Right cardiac atrium (tissue), 5 donors: ENCODE measurements at regions of chr2 and their contacts with region 1.

Region 1: GRCh38 chr2:218832520-218832919 is 917 bp upstream of the PRKAG3 start:
- DNase-seq: peak; percentile 67 to 86 (median 80)
- ATAC-seq: peak; percentile 75 to 79
- H3K4me3 ChIP-seq: no peak overlapping the region
- H3K27ac ChIP-seq: peak overlapping the region; percentile 40
- H3K4me1 ChIP-seq: peaks cover 7% of the 10 kb centered on the region
- H3K27me3 ChIP-seq: no peaks in the 10 kb centered on the region

Region 2: DNA sequence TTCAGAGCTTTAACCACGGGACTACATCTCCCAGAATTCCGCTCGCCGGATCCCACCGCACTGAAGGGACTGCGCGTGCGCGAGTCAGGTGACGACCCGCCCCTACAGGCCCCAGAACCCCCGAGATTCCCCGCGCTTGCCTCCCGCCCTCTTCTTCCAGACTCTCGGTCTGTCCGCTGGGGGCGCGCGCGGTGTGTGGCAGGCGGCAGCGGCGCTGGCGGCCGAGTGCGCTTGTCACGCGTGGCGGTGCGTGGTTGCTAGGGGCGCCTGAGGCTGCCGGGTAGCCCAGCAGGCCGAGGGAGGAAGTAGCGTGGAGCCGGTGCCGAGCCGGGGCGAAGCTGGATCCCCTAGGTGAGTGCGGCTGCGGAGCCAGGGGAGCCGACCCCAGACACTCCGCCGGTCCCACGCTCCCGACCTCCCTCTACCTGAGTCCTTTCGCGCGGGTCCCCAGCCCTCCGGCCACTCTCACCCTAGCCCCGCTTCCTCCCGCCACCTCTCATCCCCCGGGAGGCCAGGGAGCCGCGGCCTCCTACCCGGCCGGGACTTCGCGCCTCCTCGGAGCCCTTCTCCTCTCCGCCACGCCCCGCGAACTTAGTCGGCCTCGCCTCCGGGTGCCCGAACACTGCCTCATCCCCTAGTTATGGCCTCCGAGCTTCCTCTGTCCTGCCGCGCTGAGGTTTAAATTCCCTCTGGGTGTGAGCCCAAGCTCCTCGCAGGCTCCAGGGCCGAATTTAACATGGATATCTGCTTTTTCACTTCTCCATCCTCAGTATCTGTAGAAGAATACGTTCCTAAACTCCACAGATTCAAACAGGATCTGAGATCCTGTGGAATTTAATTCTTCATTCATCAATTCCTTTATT is 121.6 kb before region 1 on chr2 and contains the start of gene TTLL4:
- intact Hi-C with region 1: loop called in 1 of 4 experiments (anchors 10 kb)
- DNase-seq: peak; percentile 99
- ATAC-seq: peak; percentile 99
- H3K4me3 ChIP-seq: peak within 1 kb of the TSS; percentile 76
- H3K27ac ChIP-seq: peak within 1 kb of the TSS; percentile 77
- H3K4me1 ChIP-seq: no peaks in the 10 kb centered on the region
- H3K27me3 ChIP-seq: no peaks in the 10 kb centered on the region
- total RNA-seq, gene TTLL4: 5.7 to 15.8 (median 8.3) TPM